Natural killer cell (primary cell): ENCODE measurements at regions of chr17 and their contacts with region 1.

Region 1: DNA sequence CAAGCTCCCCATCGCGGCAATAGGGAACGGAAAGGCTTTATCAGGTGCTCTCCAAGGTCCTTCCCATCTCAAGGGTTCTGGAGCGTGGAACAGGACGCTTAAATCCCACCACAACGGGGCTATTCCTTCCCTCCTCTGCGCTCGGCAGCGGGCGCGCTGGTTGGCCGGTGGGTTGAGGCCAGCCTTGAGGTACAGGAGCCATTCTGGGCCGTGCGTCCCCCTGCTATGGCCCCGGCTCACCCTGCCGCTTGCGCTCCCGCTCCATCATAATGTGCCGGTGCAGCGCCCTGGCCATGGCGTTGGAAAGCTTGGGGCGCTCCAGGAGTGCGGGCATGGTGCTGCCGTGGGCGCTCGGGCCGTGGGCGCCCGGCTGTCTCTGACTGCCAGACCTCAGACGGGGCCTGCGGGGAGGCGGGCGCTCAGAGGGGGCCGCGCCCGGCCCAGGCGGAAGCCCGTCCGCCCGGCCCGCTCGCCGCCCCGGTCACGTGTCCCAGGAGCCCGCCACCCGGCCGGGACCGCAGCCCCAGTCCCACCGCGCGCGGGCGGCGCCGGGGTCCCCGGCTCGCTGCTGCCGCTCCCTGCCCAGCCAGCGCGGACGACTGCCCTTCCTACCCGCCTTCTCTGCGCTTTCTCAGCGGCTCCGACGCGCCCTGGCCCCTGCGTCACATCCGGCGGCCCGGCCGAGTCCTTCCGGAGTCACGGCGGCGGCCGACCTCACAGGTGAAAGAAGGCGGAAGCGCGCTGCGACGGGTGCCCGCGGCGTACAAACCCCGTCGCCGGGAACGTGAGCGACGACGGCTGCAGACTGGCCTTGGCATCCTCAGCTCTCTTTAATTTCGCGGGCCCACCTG is at the start of gene GPS2:
- DNase-seq: peak; percentile 94 to 95
- ATAC-seq: peak; percentile 83 to 87 (median 86)
- H3K4me3 ChIP-seq: peak within 1 kb of the TSS; percentile 66
- H3K4me3 Mint-ChIP-seq: peak within 1 kb of the TSS; percentile 97
- H3K27ac ChIP-seq: peak within 1 kb of the TSS; percentile 86
- H3K27ac Mint-ChIP-seq: peak within 1 kb of the TSS; percentile 91 to 99
- H3K4me1 ChIP-seq: peaks cover 44% of the 10 kb centered on the region
- H3K4me1 Mint-ChIP-seq: peaks cover 34 to 57% of the 10 kb centered on the region in 2 donors
- H3K27me3 ChIP-seq: no peaks in the 10 kb centered on the region
- H3K27me3 Mint-ChIP-seq: no peaks in the 10 kb centered on the region
- CTCF ChIP-seq: no peak
- total RNA-seq, gene GPS2: 132 to 146 (median 133) TPM

Region 2: DNA sequence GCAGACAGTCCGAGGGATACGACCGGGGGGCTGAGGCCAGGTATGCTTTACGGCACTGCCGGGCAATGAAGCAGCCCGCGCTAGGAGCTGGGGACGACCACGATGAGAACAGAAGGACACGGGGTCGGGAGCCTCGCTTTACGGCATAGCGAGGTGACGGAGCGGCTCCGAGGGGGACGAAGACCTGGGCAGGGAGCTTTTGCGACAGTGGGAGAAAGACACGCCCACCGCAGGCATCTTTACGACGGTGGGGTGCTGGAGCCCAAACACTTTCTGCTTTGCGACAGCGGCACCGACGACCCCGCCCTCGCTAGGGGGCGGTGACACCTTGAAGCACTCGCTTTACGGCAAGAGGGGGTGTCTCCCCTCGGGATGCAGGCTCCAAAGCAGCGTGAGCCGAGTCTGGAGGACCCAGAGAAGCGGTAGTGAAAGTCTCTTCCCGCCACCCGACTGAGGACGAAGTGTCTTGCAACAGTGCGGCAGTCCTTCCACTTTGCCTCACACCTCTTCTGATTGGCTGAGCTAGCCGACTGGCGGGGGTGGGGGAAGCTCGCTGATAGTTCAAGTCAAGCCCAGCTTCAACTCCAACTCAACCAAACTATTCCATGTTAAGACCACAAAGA is 14.5 kb after region 1 on chr17:
- intact Hi-C with region 1: loop called (anchors 2 kb)
- DNase-seq: peak; percentile 91 to 99
- ATAC-seq: peak; percentile 73 to 90 (median 76)
- H3K4me3 ChIP-seq: peak overlapping the region; percentile 90
- H3K4me3 Mint-ChIP-seq: peak overlapping the region; percentile 96
- H3K27ac ChIP-seq: peak overlapping the region; percentile 91
- H3K27ac Mint-ChIP-seq: peak overlapping the region; percentile 89 to 97
- H3K4me1 ChIP-seq: peaks cover 30% of the 10 kb centered on the region
- H3K4me1 Mint-ChIP-seq: peaks cover 21 to 40% of the 10 kb centered on the region in 2 donors
- H3K27me3 ChIP-seq: no peaks in the 10 kb centered on the region
- H3K27me3 Mint-ChIP-seq: no peaks in the 10 kb centered on the region
- CTCF ChIP-seq: no peak

Region 3: GRCh38 chr17:7363311-7363710 is 48.4 kb after region 1 on chr17:
- intact Hi-C with region 1: no loop called
- DNase-seq: no peak
- ATAC-seq: no peak
- H3K4me3 ChIP-seq: no peak overlapping the region
- H3K4me3 Mint-ChIP-seq: no peak overlapping the region
- H3K27ac ChIP-seq: no peak overlapping the region
- H3K27ac Mint-ChIP-seq: no peak overlapping the region
- H3K4me1 ChIP-seq: no peaks in the 10 kb centered on the region
- H3K4me1 Mint-ChIP-seq: peaks cover 0 to 3% of the 10 kb centered on the region in 2 donors
- H3K27me3 ChIP-seq: no peaks in the 10 kb centered on the region
- H3K27me3 Mint-ChIP-seq: peaks cover 0 to 6% of the 10 kb centered on the region in 2 donors
- CTCF ChIP-seq: no peak